ENCODE measurements at regions of chr1 and their contacts with region 1.

Region 1: DNA sequence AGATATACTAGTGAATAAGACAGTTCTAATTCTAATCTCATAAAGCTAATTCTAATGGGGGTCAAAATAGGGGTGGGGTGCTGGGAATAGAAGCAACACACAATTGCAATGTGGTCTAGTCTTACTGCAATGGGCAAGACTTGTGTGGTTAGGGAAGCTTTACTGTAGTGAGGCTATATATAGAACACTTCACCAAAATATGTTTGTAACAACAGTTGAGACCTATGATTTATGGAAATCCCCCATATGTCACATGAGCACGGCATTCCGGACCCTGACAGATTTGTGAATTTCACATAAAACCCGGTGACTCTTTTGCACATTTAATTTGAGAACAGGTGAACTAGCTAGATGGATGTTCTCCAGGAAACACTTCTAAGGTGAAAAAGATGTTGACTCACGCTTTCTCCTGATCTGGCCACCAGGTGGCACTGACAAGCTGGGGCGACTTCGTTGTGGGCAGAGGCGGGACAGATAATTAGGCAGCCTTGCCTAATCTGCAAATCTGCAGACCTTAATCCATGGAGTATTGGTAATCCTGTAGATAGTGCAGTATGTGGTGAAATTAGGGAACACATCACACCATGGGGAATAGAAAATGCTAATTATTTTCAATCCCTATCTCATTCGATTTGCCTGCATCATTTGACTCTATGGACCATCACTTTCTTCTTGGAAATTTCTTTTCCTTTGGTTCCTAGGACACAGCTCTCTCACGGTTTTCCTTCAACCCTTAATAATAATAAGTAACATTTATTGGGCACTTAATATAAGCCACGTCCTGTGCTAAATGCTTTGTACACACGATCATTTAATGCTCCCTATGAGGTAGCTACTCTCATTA is 37.7 kb downstream of the KIAA0040 start:
- DNase-seq: peak; percentile 60 to 88 (median 77)
- ATAC-seq: peak; percentile 65
- H3K4me3 ChIP-seq: no peak overlapping the region
- H3K4me3 Mint-ChIP-seq: no peak overlapping the region
- H3K27ac ChIP-seq: no peak overlapping the region
- H3K27ac Mint-ChIP-seq: no peak overlapping the region
- H3K4me1 ChIP-seq: peaks cover 13% of the 10 kb centered on the region
- H3K4me1 Mint-ChIP-seq: peaks cover 20% of the 10 kb centered on the region
- H3K27me3 ChIP-seq: peaks cover 0 to 6% of the 10 kb centered on the region in 2 experiments
- H3K27me3 Mint-ChIP-seq: peaks cover 26% of the 10 kb centered on the region
- CTCF ChIP-seq: peak; percentile 83

Region 2: GRCh38 chr1:175078629-175079028 is 76.2 kb before region 1 on chr1:
- CTCF ChIA-PET with region 1: no interaction called
- POLR2A ChIA-PET with region 1: no interaction called
- intact Hi-C with region 1: no loop called
- DNase-seq: no peak
- ATAC-seq: no peak
- H3K4me3 ChIP-seq: no peak overlapping the region
- H3K4me3 Mint-ChIP-seq: no peak overlapping the region
- H3K27ac ChIP-seq: no peak overlapping the region
- H3K27ac Mint-ChIP-seq: no peak overlapping the region
- H3K4me1 ChIP-seq: no peaks in the 10 kb centered on the region
- H3K4me1 Mint-ChIP-seq: no peaks in the 10 kb centered on the region
- H3K27me3 ChIP-seq: no peaks in the 10 kb centered on the region
- H3K27me3 Mint-ChIP-seq: peaks cover 11% of the 10 kb centered on the region
- CTCF ChIP-seq: no peak

Region 3: GRCh38 chr1:175192630-175193526 is 38.0 kb after region 1 on chr1 and contains the start of gene KIAA0040:
- CTCF ChIA-PET with region 1: interaction called, 41 read pairs
- POLR2A ChIA-PET with region 1: interaction called, 5 read pairs
- intact Hi-C with region 1: loop called in 1 of 2 experiments (anchors 2 kb)
- DNase-seq: peak in 8 of 9 experiments; percentile 27 to 82 (median 56)
- ATAC-seq: peak; percentile 65
- H3K4me3 ChIP-seq: peak within 1 kb of the TSS; percentile 78 to 96
- H3K4me3 Mint-ChIP-seq: peak within 1 kb of the TSS; percentile 91
- H3K27ac ChIP-seq: peak within 1 kb of the TSS; percentile 64 to 84
- H3K27ac Mint-ChIP-seq: peak within 1 kb of the TSS; percentile 88
- H3K4me1 ChIP-seq: peaks cover 48% of the 10 kb centered on the region
- H3K4me1 Mint-ChIP-seq: peaks cover 60% of the 10 kb centered on the region
- H3K27me3 ChIP-seq: no peaks in the 10 kb centered on the region
- H3K27me3 Mint-ChIP-seq: no peaks in the 10 kb centered on the region
- CTCF ChIP-seq: no peak
- total RNA-seq, gene KIAA0040: 8.7 to 9.6 TPM

Region 4: GRCh38 chr1:175267716-175268384 is 113.0 kb after region 1 on chr1:
- CTCF ChIA-PET with region 1: interaction called, 10 read pairs
- POLR2A ChIA-PET with region 1: no interaction called
- intact Hi-C with region 1: no loop called
- DNase-seq: no peak
- ATAC-seq: no peak
- H3K4me3 ChIP-seq: no peak overlapping the region
- H3K4me3 Mint-ChIP-seq: no peak overlapping the region
- H3K27ac ChIP-seq: no peak overlapping the region
- H3K27ac Mint-ChIP-seq: no peak overlapping the region
- H3K4me1 ChIP-seq: no peaks in the 10 kb centered on the region
- H3K4me1 Mint-ChIP-seq: no peaks in the 10 kb centered on the region
- H3K27me3 ChIP-seq: no peaks in the 10 kb centered on the region
- H3K27me3 Mint-ChIP-seq: no peaks in the 10 kb centered on the region
- CTCF ChIP-seq: no peak

Region 5: DNA sequence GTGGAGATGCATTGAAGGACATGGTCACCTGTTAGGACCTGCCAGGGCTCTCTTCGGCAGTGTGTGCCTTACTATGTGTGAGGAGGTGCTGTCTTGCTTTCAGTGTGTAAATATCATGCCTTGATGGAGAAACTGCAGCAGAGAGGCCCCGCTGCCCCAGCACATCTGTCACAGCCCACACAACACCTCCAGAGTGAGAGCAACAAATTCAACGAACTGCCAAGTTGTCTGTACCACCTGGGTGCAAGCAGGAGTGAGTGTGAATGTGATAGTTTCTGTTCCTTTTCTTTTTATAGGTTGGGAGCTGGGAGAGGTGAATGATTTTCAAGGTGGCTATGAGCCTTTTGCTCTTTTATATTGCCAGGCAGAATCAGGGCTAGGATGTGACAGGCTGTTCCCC is 152.3 kb after region 1 on chr1:
- CTCF ChIA-PET with region 1: interaction called, 432 read pairs
- POLR2A ChIA-PET with region 1: no interaction called
- intact Hi-C with region 1: no loop called
- DNase-seq: no peak
- ATAC-seq: no peak
- H3K4me3 ChIP-seq: no peak overlapping the region
- H3K4me3 Mint-ChIP-seq: no peak overlapping the region
- H3K27ac ChIP-seq: no peak overlapping the region
- H3K27ac Mint-ChIP-seq: no peak overlapping the region
- H3K4me1 ChIP-seq: no peaks in the 10 kb centered on the region
- H3K4me1 Mint-ChIP-seq: no peaks in the 10 kb centered on the region
- H3K27me3 ChIP-seq: no peaks in the 10 kb centered on the region
- H3K27me3 Mint-ChIP-seq: peaks cover 4% of the 10 kb centered on the region
- CTCF ChIP-seq: no peak

Region 6: DNA sequence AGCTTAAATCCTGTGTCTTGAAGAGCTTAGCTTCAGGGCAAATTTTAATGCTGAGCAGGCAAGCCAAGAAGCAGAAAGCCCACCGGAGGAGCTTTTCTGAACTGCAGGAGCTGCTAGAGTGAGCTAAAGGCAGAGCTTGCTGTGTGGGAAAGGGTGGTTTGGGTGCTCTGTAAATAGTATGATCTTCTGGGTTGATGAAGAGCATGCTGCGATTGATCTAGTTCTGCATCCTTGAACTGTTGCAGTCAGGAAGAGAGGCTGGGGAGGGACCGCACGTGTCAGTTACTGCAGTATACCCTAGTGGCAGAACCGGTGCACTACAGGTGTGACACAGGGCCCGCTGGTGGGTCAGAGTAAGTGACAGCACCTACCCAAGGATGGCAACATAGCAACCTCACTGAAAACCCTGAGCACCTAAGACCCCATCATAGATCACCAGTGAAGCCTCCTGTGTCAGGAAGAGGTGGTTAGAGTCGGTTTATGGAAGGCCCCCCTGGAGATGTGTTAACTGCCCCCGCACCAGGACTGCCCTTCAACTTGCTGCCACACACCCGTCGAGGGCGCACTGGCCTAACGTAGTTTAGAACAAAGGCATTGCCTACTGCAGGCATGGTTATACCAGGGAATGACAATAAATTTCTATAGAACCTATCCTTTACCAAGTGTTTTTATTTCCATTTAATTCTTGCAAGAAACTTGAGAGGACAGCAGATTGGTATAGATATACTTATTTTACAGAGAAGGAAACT is 183.7 kb after region 1 on chr1:
- CTCF ChIA-PET with region 1: interaction called, 23 read pairs
- POLR2A ChIA-PET with region 1: no interaction called
- intact Hi-C with region 1: no loop called
- DNase-seq: peak; percentile 31 to 71 (median 57)
- ATAC-seq: peak; percentile 98
- H3K4me3 ChIP-seq: no peak overlapping the region
- H3K4me3 Mint-ChIP-seq: no peak overlapping the region
- H3K27ac ChIP-seq: no peak overlapping the region
- H3K27ac Mint-ChIP-seq: no peak overlapping the region
- H3K4me1 ChIP-seq: no peaks in the 10 kb centered on the region
- H3K4me1 Mint-ChIP-seq: peaks cover 5% of the 10 kb centered on the region
- H3K27me3 ChIP-seq: no peaks in the 10 kb centered on the region
- H3K27me3 Mint-ChIP-seq: peaks cover 21% of the 10 kb centered on the region
- CTCF ChIP-seq: peak; percentile 58

Region 7: DNA sequence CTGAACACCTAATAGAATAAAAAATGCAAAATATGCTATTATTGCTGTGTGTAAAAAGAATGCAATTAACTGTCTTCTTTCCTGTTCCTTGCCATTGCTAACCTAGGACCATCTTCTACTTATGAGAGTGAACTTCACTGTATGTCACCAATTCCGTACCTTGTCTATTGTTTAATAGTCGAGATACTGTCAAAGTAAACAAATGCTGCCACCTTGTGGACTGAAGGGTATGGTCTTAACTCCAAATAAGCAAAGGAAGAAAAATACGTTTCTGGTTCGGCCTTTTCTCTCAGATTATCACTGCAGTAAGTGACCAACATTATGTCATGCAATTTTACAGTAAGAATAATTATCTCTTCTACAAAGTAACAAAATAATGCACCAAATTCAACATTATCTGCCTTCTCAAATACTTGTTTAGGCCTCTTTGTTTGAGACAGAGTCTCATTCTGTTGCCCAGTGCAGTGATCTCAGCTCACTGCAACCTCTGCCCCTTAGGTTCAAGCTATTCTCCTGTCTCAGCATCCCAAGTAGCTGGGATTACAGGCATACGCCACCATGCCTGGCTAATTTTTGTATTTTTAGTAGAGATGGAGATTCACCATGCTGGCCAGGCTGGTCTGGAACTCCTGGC is 918.8 kb after region 1 on chr1:
- CTCF ChIA-PET with region 1: interaction called, 3 read pairs
- POLR2A ChIA-PET with region 1: no interaction called
- intact Hi-C with region 1: loop called (anchors 2 to 5 kb)
- DNase-seq: peak in 4 of 9 experiments; percentile 14 to 57 (median 34)
- ATAC-seq: peak; percentile 59
- H3K4me3 ChIP-seq: no peak overlapping the region
- H3K4me3 Mint-ChIP-seq: no peak overlapping the region
- H3K27ac ChIP-seq: no peak overlapping the region
- H3K27ac Mint-ChIP-seq: no peak overlapping the region
- H3K4me1 ChIP-seq: no peaks in the 10 kb centered on the region
- H3K4me1 Mint-ChIP-seq: peaks cover 12% of the 10 kb centered on the region
- H3K27me3 ChIP-seq: no peaks in the 10 kb centered on the region
- H3K27me3 Mint-ChIP-seq: no peaks in the 10 kb centered on the region
- CTCF ChIP-seq: peak; percentile 66